Transverse colon (tissue), 4 donors: ENCODE measurements at regions of chr9 and their contacts with region 1.

Region 1: GRCh38 chr9:84404095-84404686 is 63.6 kb upstream of the SLC28A3 start:
- DNase-seq: no peak
- H3K4me3 ChIP-seq: no peak overlapping the region
- H3K27ac ChIP-seq: no peak overlapping the region
- H3K4me1 ChIP-seq: no peaks in the 10 kb centered on the region
- H3K27me3 ChIP-seq: no peaks in the 10 kb centered on the region
- CTCF ChIP-seq: peak in 4 of 5 experiments; percentile 27 to 43 (median 32)
- EP300 ChIP-seq: no peak
- POLR2A ChIP-seq: no peak

Region 2: DNA sequence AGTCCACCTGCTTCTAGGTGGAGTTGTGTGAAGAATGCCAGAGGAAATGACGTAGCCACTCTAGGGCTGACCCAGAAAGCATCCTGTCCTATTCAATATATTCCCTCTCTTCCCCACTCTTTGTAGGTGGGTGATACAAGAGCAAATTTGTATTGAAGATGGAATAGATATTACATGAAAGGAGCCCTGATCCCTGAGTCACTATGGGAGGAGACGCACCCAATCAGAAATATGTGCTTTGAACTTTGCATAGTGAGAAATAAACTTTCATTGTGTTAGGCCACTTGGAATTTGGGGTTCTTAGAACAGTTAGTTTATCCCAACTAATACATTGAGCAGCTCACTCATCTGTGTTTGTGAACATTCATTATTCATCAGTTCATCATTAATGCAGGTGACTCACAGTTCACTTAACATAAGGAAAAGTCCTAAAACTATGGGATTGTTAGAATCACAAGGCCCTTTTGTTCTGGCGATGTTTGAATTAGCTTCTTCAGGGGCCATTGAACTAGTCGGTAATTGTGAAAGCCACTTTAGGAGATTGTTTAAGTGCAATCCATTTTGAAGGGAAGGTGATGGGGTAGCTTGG is 238.5 kb after region 1 on chr9:
- in situ Hi-C with region 1: loop called in 1 of 4 experiments (anchors 25 kb)
- intact Hi-C with region 1: no loop called
- DNase-seq: no peak
- H3K4me3 ChIP-seq: no peak overlapping the region
- H3K27ac ChIP-seq: no peak overlapping the region
- H3K4me1 ChIP-seq: no peaks in the 10 kb centered on the region
- H3K27me3 ChIP-seq: no peaks in the 10 kb centered on the region
- CTCF ChIP-seq: no peak
- EP300 ChIP-seq: no peak
- POLR2A ChIP-seq: no peak

Region 3: DNA sequence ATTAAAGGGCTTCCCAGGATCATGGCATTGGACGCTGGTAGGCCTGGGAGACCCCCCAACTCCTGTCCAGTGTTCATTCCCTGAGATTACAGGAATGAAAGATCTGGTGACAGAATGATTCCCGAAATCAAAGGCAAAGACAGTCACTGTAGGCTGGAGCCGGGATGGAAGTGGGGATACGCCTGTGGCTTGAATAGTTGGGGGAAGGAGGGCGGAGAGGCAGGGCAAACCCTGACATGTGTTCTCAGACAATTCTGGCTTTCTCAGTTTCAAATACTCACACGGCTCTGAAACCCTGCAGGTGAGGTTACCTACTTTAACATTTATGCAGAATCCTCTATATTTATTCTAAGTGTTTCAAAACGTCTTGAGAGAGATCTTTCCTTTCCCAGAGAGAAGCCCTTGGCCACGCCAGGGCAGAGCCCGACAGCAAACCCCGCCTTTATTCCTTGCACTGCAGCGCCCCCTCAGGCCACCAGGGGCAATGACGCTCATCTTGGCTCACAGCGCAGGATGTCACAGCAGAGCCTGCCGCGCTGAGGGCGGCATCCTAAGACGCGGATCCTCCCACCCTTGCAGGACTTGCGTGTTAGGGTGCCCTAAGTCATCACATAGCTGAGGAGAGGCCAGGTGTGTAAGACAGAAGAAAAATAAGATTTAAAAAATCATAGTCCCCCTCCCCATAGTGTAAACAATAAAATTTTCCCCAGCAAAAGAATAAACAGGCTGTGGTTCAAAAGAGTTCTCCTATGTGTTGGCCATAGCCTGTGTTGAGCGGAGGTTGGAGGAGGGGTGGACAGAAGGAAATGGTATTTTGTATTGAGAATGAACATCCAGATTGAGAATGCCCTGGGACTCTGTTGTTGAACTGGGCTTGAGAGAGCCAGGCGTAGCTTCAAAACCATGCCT is 549.9 kb after region 1 on chr9:
- in situ Hi-C with region 1: loop called in 1 of 4 experiments (anchors 25 kb)
- intact Hi-C with region 1: no loop called
- DNase-seq: peak; percentile 89
- H3K4me3 ChIP-seq: no peak overlapping the region
- H3K27ac ChIP-seq: no peak overlapping the region
- H3K4me1 ChIP-seq: peaks cover 0 to 23% (median 2%) of the 10 kb centered on the region in 4 donors
- H3K27me3 ChIP-seq: no peaks in the 10 kb centered on the region
- CTCF ChIP-seq: peak; percentile 78 to 93 (median 93)
- EP300 ChIP-seq: no peak
- POLR2A ChIP-seq: no peak

Region 4: GRCh38 chr9:85258823-85259370 is 854.7 kb after region 1 on chr9:
- in situ Hi-C with region 1: loop called in 2 of 4 experiments (anchors 25 kb)
- intact Hi-C with region 1: no loop called
- DNase-seq: peak; percentile 57
- H3K4me3 ChIP-seq: no peak overlapping the region
- H3K27ac ChIP-seq: no peak overlapping the region
- H3K4me1 ChIP-seq: peaks cover 0 to 3% (median 0%) of the 10 kb centered on the region in 4 donors
- H3K27me3 ChIP-seq: no peaks in the 10 kb centered on the region
- CTCF ChIP-seq: peak; percentile 29 to 62 (median 53)
- EP300 ChIP-seq: no peak
- POLR2A ChIP-seq: no peak